ENCODE measurements at regions of chr1 and their contacts with region 1.

Region 1: GRCh38 chr1:114833421-114833820 is 21.2 kb upstream of the SYCP1 start:
- DNase-seq: no peak
- ATAC-seq: no peak
- H3K4me3 ChIP-seq: no peak overlapping the region
- H3K27ac ChIP-seq: no peak overlapping the region
- H3K4me1 ChIP-seq: no peaks in the 10 kb centered on the region
- H3K27me3 ChIP-seq: peaks cover 0 to 5% (median 0%) of the 10 kb centered on the region in 7 donors
- CTCF ChIP-seq: no peak

Region 2: DNA sequence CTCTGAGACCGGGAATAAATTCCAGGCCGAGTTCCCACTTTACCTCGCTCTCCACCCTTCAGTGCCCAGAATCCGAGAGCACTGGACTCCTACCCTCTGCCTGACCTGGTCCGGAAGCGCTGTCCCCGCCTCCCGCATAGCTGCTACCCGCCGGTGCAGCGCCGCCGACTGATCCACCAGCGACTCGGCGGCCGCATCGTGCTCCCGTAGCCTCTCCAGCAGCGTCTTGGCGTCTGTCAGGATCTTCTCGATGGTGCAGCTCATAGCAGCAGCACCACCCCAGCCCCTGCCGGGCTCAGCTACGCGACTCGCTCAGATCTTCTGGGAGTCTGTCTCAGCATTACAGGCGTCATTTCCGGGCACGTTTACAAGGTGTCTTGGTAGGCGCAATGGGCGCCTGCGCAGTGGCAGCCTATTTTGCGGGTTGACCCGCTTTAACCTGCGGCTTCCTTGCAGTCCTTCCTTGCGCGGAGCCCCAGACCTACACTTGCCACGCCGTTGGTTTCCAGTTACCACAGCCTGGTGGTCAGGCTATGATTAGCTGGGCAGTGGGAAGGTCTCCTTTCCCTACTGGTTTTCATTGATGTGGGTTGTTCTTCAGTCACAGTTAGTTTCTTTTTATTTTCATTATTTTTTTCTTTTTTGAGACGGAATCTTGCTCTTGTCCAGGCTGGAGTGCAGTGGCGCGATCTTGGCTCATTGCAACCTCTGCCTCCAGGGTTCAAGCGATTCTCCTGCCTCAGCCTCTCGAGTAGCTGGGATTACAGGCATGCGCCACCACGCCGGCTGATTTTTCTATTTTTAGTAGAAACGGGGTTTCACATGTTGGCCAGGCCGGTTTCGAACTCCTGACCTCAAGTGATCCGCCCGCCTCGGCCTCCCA is 52.8 kb before region 1 on chr1 and contains the start of gene SIKE1:
- intact Hi-C with region 1: no loop called
- DNase-seq: peak; percentile 89 to 92
- ATAC-seq: peak; percentile 95 to 99 (median 99)
- H3K4me3 ChIP-seq: peak within 1 kb of the TSS; percentile 68 to 95 (median 78)
- H3K27ac ChIP-seq: peak within 1 kb of the TSS; percentile 30 to 92 (median 88)
- H3K4me1 ChIP-seq: peaks cover 0 to 22% (median 13%) of the 10 kb centered on the region in 9 donors
- H3K27me3 ChIP-seq: peaks cover 0 to 8% (median 3%) of the 10 kb centered on the region in 7 donors
- CTCF ChIP-seq: peak in 3 of 9 donors; percentile 19 to 31 (median 27)
- total RNA-seq, gene SIKE1: 20.8 to 38.2 (median 31.3) TPM

Region 3: GRCh38 chr1:114853554-114853953 is 20.1 kb after region 1 on chr1:
- intact Hi-C with region 1: loop called in 1 of 10 experiments (anchors 1 kb)
- DNase-seq: no peak
- ATAC-seq: no peak
- H3K4me3 ChIP-seq: no peak overlapping the region
- H3K27ac ChIP-seq: no peak overlapping the region
- H3K4me1 ChIP-seq: peaks cover 0 to 7% (median 0%) of the 10 kb centered on the region in 9 donors
- H3K27me3 ChIP-seq: peaks cover 0 to 71% (median 64%) of the 10 kb centered on the region in 7 donors
- CTCF ChIP-seq: no peak

Measured in heart right ventricle (tissue), 16 donors.